Calu3 (cell line): ENCODE measurements at regions of chr12 and their contacts with region 1.

Region 1: GRCh38 chr12:15220994-15221885 is at the start of gene RERG:
- DNase-seq: peak; percentile 92
- H3K4me3 Mint-ChIP-seq: peak within 1 kb of the TSS; percentile 79
- H3K27ac Mint-ChIP-seq: peak within 1 kb of the TSS; percentile 29
- H3K4me1 Mint-ChIP-seq: peaks cover 12% of the 10 kb centered on the region
- H3K27me3 Mint-ChIP-seq: no peaks in the 10 kb centered on the region
- CTCF ChIP-seq: peak; percentile 94
- total RNA-seq, gene RERG: 6.0 and 8.9 TPM in 2 replicates

Region 2: GRCh38 chr12:14884458-14884878 is 336.8 kb before region 1 on chr12:
- CTCF ChIA-PET with region 1: no interaction called
- intact Hi-C with region 1: no loop called
- DNase-seq: peak; percentile 70
- H3K4me3 Mint-ChIP-seq: no peak overlapping the region
- H3K27ac Mint-ChIP-seq: no peak overlapping the region
- H3K4me1 Mint-ChIP-seq: peaks cover 38% of the 10 kb centered on the region
- H3K27me3 Mint-ChIP-seq: no peaks in the 10 kb centered on the region
- CTCF ChIP-seq: no peak

Region 3: GRCh38 chr12:15011162-15011561 is 210.1 kb before region 1 on chr12:
- CTCF ChIA-PET with region 1: no interaction called
- intact Hi-C with region 1: loop called (anchors 5 kb)
- DNase-seq: no peak
- H3K4me3 Mint-ChIP-seq: no peak overlapping the region
- H3K27ac Mint-ChIP-seq: no peak overlapping the region
- H3K4me1 Mint-ChIP-seq: no peaks in the 10 kb centered on the region
- H3K27me3 Mint-ChIP-seq: peaks cover 20% of the 10 kb centered on the region
- CTCF ChIP-seq: peak; percentile 22

Region 4: DNA sequence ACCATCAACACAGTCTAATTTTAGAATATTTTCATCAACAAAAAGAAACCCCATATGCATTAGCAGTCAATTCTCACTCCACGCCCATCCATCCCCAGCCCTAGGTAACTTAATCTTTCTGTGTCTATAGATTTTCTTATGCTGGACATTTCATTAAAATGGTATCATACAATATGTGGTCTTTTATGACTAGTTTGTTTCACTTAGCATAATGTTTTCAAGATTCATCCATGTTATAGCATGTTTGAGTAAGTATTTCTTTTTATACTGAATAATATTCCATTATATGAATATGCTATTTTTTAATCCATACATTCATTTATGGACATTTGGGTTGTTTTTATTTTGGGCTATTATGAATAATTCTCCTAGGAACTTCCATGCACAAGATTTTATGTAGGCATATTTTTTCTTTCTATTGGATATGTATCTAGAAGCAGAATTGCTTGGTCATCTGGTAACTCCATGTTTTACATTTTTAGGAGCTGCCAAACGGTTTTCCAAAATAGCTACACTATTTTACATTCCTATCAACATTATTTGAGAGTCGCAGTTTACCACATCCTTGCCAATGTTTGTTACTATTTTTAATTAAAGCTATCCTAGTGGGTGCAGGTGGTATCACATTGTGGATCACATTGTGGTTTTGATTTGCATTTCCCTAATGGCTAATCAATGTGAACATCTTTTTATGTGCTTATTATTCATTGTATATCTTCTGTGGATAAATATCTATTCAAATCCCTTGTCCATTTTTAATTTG is 49.0 kb before region 1 on chr12:
- CTCF ChIA-PET with region 1: interaction called, 10 read pairs
- intact Hi-C with region 1: no loop called
- DNase-seq: no peak
- H3K4me3 Mint-ChIP-seq: no peak overlapping the region
- H3K27ac Mint-ChIP-seq: no peak overlapping the region
- H3K4me1 Mint-ChIP-seq: peaks cover 66% of the 10 kb centered on the region
- H3K27me3 Mint-ChIP-seq: no peaks in the 10 kb centered on the region
- CTCF ChIP-seq: no peak

Region 5: GRCh38 chr12:15522565-15523187 is 301.4 kb after region 1 on chr12:
- CTCF ChIA-PET with region 1: interaction called, 10 read pairs
- intact Hi-C with region 1: no loop called
- DNase-seq: peak; percentile 21
- H3K4me3 Mint-ChIP-seq: no peak overlapping the region
- H3K27ac Mint-ChIP-seq: no peak overlapping the region
- H3K4me1 Mint-ChIP-seq: peaks cover 19% of the 10 kb centered on the region
- H3K27me3 Mint-ChIP-seq: peaks cover 20% of the 10 kb centered on the region
- CTCF ChIP-seq: peak; percentile 40